ENCODE measurements at regions of chr3 and their contacts with region 1.

Region 1: GRCh38 chr3:49500732-49501609 is 30.9 kb downstream of the DAG1 start:
- DNase-seq: peak; percentile 79
- H3K27ac ChIP-seq: peak overlapping the region; percentile 97
- CTCF ChIP-seq: no peak

Region 2: GRCh38 chr3:49295489-49296058 is 205.4 kb before region 1 on chr3:
- CTCF ChIA-PET with region 1: no interaction called
- POLR2A ChIA-PET with region 1: no interaction called
- DNase-seq: no peak
- H3K27ac ChIP-seq: peak overlapping the region; percentile 94
- CTCF ChIP-seq: peak; percentile 59

Region 3: DNA sequence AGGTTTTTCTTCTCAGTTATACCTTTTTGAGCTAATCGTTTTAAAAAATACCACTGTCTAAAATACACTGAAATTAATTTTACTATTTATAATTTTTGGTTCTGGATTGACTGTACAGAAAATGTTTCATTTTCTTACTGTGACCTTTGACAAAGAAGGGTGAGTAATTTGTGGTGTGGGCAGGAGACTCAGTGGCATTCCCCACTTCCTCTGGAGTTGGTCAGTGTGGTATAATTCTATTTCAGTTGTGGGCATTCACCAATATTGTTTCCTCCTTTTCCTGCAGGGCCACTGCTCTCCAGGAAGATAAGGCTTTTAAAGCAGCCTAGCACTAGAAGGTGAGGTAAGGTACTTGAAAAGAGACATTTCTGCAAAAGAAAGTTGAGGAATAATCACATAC is 24.4 kb before region 1 on chr3:
- CTCF ChIA-PET with region 1: no interaction called
- POLR2A ChIA-PET with region 1: interaction called, 11 read pairs
- DNase-seq: no peak
- H3K27ac ChIP-seq: no peak overlapping the region
- CTCF ChIP-seq: no peak